Left ventricle myocardium superior (tissue), 1 donor: ENCODE measurements at regions of chr6 and their contacts with region 1.

Region 1: DNA sequence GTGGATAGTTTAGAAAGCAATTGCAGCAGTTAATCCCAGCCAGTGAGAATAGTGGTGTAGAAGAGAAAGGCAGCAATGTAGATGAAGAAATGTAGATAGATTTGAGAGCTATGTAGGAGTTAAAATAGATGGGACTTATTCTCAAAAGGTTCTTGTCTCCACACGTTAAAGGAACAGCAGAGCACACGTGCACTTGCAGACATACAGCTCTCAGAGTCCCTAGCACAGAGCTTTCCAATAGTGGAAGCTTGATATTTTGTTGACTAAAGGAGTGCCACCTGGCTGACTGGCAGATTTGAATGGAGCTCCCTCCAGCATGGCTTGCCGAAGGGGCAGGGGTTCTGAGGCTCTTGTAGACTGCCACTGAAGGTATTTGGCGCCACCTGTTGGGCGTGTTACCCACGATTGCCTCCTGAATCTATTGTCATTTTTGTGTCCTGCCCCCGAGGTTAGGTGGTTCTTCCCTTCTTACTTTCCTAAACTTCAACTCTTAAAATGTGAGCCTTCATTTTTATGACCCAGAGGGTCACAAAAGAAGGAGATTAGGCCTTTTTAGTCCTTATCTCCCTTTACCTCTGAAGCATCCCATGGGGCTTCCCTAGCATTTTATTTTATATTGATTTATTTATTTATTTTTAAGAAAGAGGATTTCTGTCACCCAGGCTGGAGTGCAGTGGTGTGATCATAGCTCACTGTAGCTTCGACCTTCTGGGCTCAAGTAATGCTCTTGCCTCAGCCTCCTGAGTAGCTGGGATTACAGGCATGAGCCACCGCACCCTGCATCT is 16.4 kb downstream of the BRD2 start:
- DNase-seq: peak; percentile 94
- ATAC-seq: peak; percentile 83

Region 2: DNA sequence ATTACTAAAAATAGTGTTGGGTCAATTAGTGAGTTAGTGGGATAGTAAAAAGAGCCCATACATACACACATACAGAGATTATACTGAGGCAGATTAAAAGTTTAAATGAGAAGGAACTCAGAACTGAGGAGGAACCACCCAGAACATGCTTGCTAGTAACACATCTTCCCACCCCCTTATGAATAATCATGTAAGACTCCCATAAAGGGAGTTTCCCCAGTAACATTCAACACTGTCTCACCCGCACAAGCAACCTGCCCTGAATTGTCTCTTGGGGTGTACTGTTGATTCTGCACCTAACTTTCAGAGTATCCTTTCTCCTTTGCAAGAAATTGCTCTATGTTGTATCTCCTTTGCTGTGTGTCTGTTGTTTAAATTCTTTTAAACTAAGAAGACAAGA is 210.4 kb before region 1 on chr6:
- intact Hi-C with region 1: no loop called
- DNase-seq: no peak
- ATAC-seq: no peak

Region 3: DNA sequence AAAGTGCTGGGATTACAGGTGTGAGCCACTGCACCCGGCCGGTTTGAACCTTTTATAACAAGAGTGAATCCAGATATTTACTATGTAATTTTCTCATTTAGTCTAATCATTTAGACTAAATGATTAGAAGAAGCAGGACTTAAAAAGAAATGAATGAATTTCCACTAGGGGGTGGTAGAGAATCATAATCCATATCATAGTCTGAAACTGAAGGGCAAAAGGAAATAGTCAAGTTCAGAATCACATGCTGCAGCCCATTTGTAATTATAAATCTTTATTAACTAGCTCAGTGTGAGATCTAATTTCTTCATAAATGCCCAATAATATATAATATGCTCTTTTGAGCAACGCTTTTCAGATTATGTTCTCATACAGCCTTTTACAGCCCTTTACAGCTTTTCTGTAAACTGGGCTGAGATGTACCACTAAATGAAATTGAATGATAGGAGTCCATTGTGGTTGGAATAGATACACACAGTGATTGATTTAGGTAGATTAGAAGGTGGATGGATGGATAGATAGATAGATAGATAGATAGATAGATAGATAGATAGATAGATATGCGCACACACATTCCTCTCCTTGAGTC is 99.0 kb before region 1 on chr6:
- intact Hi-C with region 1: loop called (anchors 5 kb)
- DNase-seq: no peak
- ATAC-seq: peak; percentile 60

Region 4: DNA sequence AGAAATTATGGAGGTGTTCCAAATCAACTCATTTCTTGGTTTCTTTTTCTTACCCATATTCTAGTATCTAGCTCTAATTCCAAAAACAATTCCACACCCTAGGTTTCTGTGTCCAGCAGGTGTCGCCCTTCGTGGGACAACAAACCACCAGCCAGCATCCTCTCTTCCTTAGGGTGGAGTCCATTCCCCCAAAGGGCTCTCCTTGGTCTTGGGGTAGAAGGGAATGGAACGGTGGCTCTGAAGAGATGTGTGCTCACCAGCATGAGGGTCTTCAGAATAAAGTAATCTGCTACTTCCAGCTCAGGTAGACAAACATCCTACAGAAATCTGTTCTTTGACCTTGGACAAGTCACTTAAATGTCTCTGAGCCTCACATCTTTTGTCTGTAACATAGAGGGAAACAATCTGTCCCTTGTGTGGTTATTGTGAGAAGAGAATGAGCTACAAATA is 51.1 kb before region 1 on chr6:
- intact Hi-C with region 1: loop called (anchors 5 kb)
- DNase-seq: peak; percentile 87
- ATAC-seq: peak; percentile 76